Gastrocnemius medialis (tissue), 4 donors: ENCODE measurements at regions of chr12 and their contacts with region 1.

Region 1: DNA sequence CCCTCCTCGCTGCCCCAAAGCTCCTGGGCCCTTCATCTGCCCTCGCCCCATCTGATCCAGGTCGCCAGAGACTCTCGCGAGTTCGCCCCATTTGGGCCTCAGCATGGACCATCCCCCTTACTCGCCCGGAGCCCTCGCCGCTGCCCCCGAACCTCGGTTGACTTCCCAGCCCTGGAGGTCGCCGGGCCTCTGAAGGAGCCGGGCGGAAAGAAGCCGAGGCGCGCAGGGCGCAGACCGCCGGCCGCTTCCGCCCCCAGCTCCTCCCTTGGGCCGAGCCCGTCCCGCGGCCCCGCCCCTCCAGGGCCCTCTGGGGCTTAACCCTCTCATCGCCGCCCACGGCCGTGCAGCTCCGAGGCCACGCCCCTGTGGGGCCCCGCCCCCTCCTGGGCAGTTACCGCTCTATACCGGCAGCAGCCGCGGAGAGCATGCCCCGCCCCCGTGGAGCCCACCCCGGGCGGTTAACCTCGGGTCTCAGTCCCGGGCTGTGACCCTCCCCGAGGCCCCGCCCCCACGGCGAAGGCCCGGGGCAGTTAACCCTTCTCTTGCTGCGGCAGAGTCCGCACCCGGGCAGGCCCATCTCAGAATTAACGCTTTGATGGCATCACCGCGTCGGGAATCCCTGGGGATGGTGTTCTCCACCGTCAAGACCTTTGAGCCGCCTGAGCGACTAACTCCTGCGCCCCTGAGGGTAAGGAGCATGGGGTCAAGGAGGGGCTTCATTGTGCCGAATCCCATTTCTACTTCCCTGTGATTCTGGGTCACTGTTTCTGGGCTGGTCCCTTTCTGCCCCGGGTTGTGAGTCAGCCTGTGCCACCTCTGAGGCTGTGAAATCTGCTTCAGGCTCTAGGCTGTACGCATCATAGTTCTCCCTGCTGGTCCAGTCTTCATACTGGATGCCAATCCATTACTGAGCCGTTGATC is at the start of gene SPSB2:
- DNase-seq: peak; percentile 91 to 93
- ATAC-seq: peak; percentile 81 to 82
- H3K4me3 ChIP-seq: peak within 1 kb of the TSS; percentile 84 to 96 (median 90)
- H3K27ac ChIP-seq: peak within 1 kb of the TSS; percentile 82 to 100 (median 90)
- H3K4me1 ChIP-seq: peaks cover 29% of the 10 kb centered on the region in 2 donors
- H3K27me3 ChIP-seq: no peaks in the 10 kb centered on the region
- CTCF ChIP-seq: no peak
- POLR2A ChIP-seq: peak; percentile 75 to 79
- total RNA-seq, gene SPSB2: 4.6 to 10.0 (median 5.0) TPM

Region 2: DNA sequence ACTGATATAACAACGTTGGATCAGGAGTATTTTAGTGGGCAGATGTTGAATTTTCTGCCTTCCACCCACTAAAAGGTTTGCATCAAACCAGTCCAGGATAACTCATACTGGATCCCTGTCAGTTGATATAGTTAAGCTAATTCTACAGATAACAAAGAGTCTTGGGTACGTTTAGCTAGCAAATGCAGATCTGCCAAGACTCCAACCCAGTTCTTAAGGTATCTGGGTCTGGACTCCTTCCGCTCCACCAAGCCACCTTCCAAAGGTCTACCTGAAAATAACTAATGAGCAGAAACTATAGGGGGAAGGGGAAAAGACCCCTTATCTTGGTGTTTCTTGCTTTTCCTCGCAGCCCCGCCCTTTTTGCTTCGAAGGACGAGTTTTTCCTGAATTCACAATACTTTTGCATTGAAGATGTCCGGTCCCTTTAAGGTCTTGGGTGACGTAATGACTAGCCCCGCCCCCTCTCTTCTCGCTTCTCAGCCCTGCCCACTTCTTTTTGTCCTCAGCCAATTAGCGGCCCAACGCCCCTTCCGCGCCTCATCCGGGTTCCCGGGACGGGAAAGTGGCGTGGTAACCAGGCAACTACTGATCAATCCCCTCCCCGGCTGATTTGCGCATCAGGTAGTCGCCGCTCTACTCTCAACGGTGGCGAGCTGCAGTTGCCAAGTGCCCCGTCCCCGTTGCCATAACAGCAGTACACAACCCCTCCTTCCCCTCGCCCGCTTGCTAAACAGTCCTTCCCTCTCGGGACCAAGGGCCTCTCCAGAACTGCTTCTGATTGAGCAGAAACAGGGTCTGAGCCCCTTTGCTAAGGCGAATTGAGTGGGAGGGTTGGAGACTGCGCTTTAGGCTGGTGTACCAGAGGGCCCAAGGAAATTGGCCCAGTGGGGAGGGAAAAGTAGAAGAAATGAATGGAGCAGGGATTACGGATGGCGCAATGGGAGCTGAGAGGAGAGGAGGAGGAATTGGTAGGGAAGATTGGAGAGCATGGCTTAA is 31.2 kb after region 1 on chr12 and contains the start of gene LRRC23:
- in situ Hi-C with region 1: no loop called
- intact Hi-C with region 1: loop called (anchors 1 kb)
- DNase-seq: peak; percentile 91 to 94
- ATAC-seq: peak; percentile 98 to 99
- H3K4me3 ChIP-seq: peak within 1 kb of the TSS; percentile 67 to 91 (median 81)
- H3K27ac ChIP-seq: peak within 1 kb of the TSS; percentile 69 to 82 (median 78)
- H3K4me1 ChIP-seq: peaks cover 9 to 12% of the 10 kb centered on the region in 2 donors
- H3K27me3 ChIP-seq: no peaks in the 10 kb centered on the region
- CTCF ChIP-seq: no peak
- POLR2A ChIP-seq: peak in 1 of 2 donors; percentile 32
- total RNA-seq, gene LRRC23: 6.5 to 14.0 (median 11.0) TPM

Region 3: DNA sequence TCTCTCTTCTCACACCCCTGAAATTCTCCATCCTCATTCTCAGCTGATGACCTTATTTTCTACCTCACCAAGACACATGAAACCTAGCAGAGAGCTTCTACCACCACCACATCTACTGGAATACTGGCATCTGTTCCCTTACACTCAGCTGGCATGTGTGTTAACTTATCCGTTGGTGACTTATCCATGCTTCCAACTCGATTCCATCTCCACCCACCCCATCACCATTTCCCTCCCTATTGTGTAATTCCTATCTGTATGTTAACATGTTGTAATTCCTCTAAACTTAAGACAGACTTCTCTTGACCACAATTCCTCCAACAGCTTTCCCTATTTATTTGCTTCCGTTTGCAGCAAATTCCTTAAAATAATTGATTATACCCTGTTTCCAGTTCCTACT is 202.6 kb after region 1 on chr12:
- in situ Hi-C with region 1: no loop called
- intact Hi-C with region 1: no loop called
- DNase-seq: no peak
- ATAC-seq: no peak
- H3K4me3 ChIP-seq: no peak overlapping the region
- H3K27ac ChIP-seq: no peak overlapping the region
- H3K4me1 ChIP-seq: peaks cover 0 to 4% of the 10 kb centered on the region in 2 donors
- H3K27me3 ChIP-seq: no peaks in the 10 kb centered on the region
- CTCF ChIP-seq: no peak
- POLR2A ChIP-seq: no peak